HEK293 (cell line): ENCODE measurements at regions of chr2 and their contacts with region 1.

Region 1: DNA sequence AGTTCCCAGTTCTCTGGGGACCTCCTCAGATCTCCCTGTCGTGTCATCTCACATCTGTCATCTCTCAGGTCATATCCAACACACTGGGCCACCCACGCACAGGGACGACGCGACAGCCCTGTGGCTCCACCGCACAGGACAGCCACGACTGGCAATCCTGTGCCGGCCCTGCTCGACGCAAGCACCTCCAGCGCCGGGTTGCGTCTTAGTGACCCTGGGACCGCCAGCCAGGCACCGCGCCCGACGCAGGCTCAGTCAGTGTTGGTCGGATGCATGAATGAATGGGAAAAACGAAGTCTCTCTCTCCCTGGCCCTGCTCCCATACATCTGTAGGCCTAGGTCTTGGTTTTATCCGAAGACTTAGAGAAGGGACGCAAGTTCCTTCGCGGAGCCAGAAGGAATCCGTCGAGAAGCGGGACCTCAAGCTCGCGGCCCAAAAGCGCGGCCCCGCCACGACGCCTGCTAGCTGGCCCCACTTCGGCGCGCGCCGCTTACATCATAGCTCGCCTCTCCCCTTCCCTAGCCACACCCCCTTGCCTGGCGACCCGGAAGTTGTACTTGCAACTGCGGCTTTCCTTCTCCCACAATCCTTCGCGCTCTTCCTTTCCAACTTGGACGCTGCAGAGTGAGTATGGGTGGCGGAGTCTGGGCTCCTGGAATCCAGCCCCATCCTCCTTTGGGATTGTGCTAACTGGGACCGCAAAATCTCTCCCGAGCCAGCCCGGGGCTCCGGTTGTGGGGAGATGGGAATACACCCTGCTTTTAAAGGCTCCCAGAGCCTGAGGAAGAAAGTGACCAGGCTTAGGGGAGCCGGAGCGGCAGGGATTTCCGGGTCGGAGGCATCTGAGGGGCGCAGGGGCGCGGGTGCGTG is at the start of gene RPL31:
- H3K4me3 ChIP-seq: peak within 1 kb of the TSS; percentile 93
- H3K27ac ChIP-seq: peak within 1 kb of the TSS; percentile 98
- H3K4me1 ChIP-seq: no peaks in the 10 kb centered on the region
- CTCF ChIP-seq: no peak

Region 2: GRCh38 chr2:100339823-100340222 is 662.1 kb before region 1 on chr2:
- CTCF ChIA-PET with region 1: no interaction called
- POLR2A ChIA-PET with region 1: no interaction called
- H3K4me3 ChIP-seq: no peak overlapping the region
- H3K27ac ChIP-seq: no peak overlapping the region
- H3K4me1 ChIP-seq: no peaks in the 10 kb centered on the region
- CTCF ChIP-seq: no peak

Region 3: DNA sequence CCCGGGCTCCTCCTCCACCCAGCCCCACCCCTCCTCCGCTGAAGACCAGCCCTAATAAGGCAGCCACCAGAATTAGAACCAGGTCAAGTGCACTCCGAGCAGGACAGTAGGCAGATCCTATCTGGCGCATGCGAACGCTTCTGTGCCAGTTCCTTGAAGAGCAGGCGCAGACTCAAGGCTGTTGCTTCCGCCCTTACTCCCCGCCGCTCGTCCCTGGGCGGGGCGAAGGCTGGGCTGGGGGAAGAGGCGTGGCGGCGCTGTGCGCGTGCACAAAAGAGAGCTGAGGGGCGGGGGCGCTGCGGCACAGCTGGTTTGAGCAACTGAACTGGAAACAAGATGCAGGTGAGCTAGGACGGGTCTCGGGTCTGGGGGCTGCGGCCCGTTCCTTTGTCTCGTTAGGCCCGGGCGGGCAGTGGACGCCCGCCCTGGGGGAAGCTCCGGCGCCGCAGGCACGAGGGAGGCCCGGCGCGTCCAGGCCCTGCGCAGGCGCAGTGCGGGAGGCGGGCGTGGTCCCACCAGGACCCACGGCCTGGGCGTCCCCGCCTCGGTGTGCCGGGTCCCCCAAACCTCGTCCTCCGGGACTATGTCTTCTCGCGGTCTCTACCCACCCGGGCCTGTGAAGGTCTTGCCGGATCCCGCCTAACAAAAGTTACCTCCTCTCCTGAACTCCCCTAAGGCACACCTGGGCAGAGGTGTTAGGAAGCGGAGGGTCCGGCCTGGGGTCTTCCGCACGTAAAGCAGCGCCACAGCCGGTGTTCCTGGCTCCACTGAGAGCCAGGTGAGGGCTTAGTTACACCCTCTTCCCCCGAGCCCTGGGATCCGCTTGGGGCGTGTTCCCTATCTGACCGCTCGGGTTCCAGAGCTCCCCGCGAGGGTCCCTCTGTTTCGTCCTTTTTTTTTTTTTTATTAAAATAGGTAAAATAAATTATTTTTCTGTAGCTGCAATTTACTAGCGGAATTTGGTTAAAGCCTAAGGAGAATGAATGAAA is 438.9 kb before region 1 on chr2 and contains the start of gene PDCL3:
- CTCF ChIA-PET with region 1: no interaction called
- POLR2A ChIA-PET with region 1: interaction called, 12 read pairs
- H3K4me3 ChIP-seq: peak within 1 kb of the TSS; percentile 89
- H3K27ac ChIP-seq: peak within 1 kb of the TSS; percentile 60
- H3K4me1 ChIP-seq: no peaks in the 10 kb centered on the region
- CTCF ChIP-seq: peak; percentile 95

Region 4: DNA sequence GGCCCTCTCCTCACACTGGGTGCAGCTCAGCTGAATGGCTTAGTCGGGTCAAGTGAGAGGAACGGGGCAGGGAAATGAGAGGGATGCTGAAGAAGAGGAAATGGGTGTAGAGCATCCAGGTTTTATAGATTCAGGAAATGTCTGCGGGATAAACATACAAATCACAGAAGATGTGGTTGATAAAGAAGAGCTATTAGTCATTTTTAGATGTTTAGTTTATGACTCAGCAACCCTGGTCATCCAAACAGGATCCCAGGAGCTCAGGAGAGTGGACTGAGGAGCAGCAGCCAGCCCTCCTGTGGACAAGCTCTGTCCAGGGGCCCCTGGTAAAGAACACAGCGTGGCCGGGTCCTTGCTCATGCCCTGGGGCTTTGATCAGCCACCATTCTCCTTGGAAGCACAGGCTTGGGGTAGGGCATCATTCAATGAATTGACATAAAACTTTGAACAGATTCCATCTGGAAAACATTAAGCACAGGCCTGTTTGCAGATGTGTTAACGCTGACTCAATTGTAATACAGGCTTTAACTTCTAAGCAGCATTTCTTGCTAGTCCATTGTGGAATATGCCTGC is 99.0 kb before region 1 on chr2:
- CTCF ChIA-PET with region 1: no interaction called
- POLR2A ChIA-PET with region 1: interaction called, 12 read pairs
- H3K4me3 ChIP-seq: no peak overlapping the region
- H3K27ac ChIP-seq: peak overlapping the region; percentile 66; the same call in 1 of the 2 replicates
- H3K4me1 ChIP-seq: peaks cover 21% of the 10 kb centered on the region
- CTCF ChIP-seq: no peak

Region 5: GRCh38 chr2:100967716-100968115 is 34.2 kb before region 1 on chr2:
- CTCF ChIA-PET with region 1: no interaction called
- POLR2A ChIA-PET with region 1: no interaction called
- H3K4me3 ChIP-seq: no peak overlapping the region
- H3K27ac ChIP-seq: no peak overlapping the region
- H3K4me1 ChIP-seq: no peaks in the 10 kb centered on the region
- CTCF ChIP-seq: no peak

Region 6: GRCh38 chr2:101012706-101013181 is 10.8 kb after region 1 on chr2:
- CTCF ChIA-PET with region 1: interaction called, 17 read pairs
- POLR2A ChIA-PET with region 1: interaction called, 3 read pairs
- H3K4me3 ChIP-seq: no peak overlapping the region
- H3K27ac ChIP-seq: no peak overlapping the region
- H3K4me1 ChIP-seq: no peaks in the 10 kb centered on the region
- CTCF ChIP-seq: peak; percentile 65